Heart left ventricle (tissue), 16 donors: ENCODE measurements at regions of chr17 and their contacts with region 1.

Region 1: DNA sequence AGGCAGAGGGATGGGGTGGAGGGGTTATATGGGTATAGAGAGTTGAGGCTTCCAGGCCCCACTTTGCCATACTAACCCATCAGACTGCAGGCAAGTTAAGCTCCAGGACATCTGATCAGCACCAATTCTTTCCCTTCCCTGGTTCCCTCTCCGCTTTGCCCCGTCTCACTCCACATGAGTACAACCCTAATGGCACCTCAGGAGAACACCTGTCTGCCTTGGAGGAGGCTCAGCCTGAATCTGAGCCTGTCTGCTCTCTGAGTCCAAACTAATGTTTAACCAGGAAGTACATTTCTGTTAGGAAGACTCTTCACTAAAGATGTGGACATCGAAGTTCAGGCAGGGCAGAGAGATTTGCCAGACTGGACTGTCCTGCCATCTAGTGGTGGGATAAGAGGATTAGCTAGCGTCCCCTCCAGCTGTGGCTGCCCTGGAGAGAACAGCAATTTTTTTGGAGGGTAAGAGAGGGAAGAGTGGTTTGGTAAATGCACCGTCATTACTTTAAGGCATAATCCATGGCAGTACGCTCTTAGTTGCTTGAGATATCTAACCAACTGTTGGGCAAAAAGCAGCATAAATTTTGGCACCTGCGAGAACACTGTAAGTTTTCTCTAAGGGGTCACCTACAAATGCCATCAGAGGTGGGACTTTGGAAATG is 29.2 kb upstream of the LRRC75A start:
- DNase-seq: peak in 4 of 5 donors; percentile 70 to 80 (median 74)
- ATAC-seq: peak; percentile 86 to 93 (median 90)
- H3K4me3 ChIP-seq: no peak overlapping the region
- H3K27ac ChIP-seq: no peak overlapping the region
- H3K4me1 ChIP-seq: peaks cover 0 to 18% (median 7%) of the 10 kb centered on the region in 12 donors
- H3K27me3 ChIP-seq: no peaks in the 10 kb centered on the region
- CTCF ChIP-seq: peak; percentile 84 to 97 (median 92)
- POLR2A ChIP-seq: no peak

Region 2: DNA sequence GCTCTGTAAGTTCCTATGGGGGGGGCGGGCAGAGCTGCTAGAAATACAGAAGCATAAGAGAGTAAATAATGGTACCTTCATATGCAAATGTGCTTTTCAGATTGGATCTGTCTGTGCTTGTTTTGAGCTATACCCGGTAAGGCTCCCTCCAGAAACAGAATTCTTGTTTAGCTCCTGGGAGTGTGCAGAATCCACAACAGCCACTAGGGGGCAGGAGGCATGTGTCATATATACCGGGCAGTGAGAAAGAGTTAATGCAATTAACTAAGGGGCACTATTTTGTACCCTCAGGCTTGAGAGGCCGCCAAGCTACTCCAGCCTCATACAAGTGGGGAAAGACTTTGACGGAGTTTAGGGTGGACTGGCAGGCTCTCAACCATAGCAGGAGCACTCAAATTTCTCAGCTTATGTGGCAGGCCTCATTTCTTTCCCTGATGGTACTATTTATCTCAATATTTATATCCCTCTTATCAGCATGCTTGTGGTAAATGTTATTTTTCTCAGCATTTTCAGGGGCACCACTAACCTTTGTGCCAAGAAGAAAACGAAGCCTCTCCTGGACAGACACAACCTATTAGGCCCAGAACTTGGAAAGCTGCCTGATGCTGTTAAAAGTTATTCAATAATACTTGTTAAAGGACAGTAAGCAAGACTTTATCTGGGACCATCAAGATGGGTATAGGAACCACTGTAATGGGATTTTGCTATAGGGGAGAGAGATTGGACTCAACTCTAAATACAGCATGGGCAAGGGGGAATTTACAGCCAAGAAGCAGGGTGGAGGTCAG is 157.3 kb before region 1 on chr17:
- intact Hi-C with region 1: loop called in 9 of 10 experiments (anchors 1 to 5 kb)
- DNase-seq: peak; percentile 56 to 73 (median 66)
- ATAC-seq: peak; percentile 63 to 88 (median 82)
- H3K4me3 ChIP-seq: no peak overlapping the region
- H3K27ac ChIP-seq: peak overlapping the region in 2 of 12 donors; percentile 5 to 31
- H3K4me1 ChIP-seq: peaks cover 0 to 5% (median 0%) of the 10 kb centered on the region in 12 donors
- H3K27me3 ChIP-seq: no peaks in the 10 kb centered on the region
- CTCF ChIP-seq: peak; percentile 87 to 96 (median 92)
- POLR2A ChIP-seq: no peak

Region 3: DNA sequence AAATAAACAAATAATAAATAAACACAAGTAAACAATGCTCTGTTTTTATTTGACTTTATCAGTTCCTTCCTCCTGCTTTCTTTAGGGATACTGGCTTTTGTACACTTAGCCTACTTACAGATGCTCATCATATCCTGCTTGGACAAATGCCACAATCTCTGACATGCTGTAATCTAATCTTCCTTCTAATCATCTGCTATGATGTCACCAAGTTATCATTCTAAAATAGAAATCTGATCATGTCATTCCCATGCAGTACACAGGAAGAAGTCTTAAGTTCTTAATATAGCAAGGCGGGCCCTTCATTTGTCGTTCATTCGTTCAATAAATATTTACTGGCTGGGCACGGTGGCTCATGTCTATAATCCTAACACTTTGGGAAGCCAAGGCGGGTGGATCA is 149.5 kb before region 1 on chr17:
- intact Hi-C with region 1: loop called in 2 of 10 experiments (anchors 5 kb)
- DNase-seq: peak in 1 of 5 donors; percentile 31
- ATAC-seq: peak in 3 of 4 donors; percentile 15 to 77 (median 44)
- H3K4me3 ChIP-seq: no peak overlapping the region
- H3K27ac ChIP-seq: peak overlapping the region in 6 of 12 donors; percentile 16 to 63 (median 42)
- H3K4me1 ChIP-seq: peaks cover 0 to 19% (median 6%) of the 10 kb centered on the region in 12 donors
- H3K27me3 ChIP-seq: no peaks in the 10 kb centered on the region
- CTCF ChIP-seq: no peak
- POLR2A ChIP-seq: no peak

Region 4: GRCh38 chr17:16380640-16381495 is 140.3 kb before region 1 on chr17 and contains the start of gene UBB:
- intact Hi-C with region 1: loop called in 4 of 10 experiments (anchors 2 to 5 kb)
- DNase-seq: peak; percentile 98
- ATAC-seq: peak; percentile 98 to 99 (median 99)
- H3K4me3 ChIP-seq: peak within 1 kb of the TSS; percentile 45 to 83 (median 72)
- H3K27ac ChIP-seq: peak within 1 kb of the TSS; percentile 88 to 99 (median 95)
- H3K4me1 ChIP-seq: peaks cover 10 to 35% (median 25%) of the 10 kb centered on the region in 12 donors
- H3K27me3 ChIP-seq: no peaks in the 10 kb centered on the region
- CTCF ChIP-seq: peak in 3 of 12 donors; percentile 10 to 17 (median 13)
- POLR2A ChIP-seq: peak; percentile 70 to 97
- total RNA-seq, gene UBB: 665 to 2,180 (median 1,547) TPM

Region 5: DNA sequence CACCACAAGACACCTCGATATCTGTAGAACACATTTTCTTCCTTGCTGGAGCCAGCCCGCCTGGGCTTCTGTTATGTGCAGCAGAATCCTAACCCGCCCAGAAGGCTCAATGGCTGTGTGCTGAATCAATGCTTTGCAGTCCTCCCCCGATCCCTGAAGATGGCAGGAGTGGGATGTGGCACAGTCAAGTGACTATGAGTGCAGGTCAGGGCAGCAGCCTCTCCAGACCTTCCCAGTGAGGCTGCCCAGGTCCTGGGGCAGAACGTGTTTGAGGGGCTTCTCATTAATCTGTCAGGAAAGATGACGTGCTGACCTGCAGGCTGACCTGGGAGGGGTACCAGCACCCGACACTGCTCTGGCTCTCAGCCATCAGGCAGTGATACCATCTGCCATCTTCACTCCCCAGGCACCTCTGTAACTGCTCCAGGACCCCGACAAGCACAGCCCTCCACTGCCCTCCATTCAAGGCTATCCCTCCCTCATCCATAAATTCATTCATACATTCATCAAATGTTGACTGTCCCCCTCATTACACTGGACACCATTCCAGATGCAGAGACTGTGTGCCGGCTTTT is 64.4 kb before region 1 on chr17:
- intact Hi-C with region 1: loop called (anchors 1 to 2 kb)
- DNase-seq: no peak
- ATAC-seq: no peak
- H3K4me3 ChIP-seq: no peak overlapping the region
- H3K27ac ChIP-seq: no peak overlapping the region
- H3K4me1 ChIP-seq: peaks cover 0 to 17% (median 4%) of the 10 kb centered on the region in 12 donors
- H3K27me3 ChIP-seq: no peaks in the 10 kb centered on the region
- CTCF ChIP-seq: peak in 1 of 12 donors; percentile 14
- POLR2A ChIP-seq: no peak

Region 6: GRCh38 chr17:16463358-16464302 is 57.6 kb before region 1 on chr17:
- intact Hi-C with region 1: loop called in 1 of 10 experiments (anchors 2 kb)
- DNase-seq: peak in 4 of 5 donors; percentile 60 to 73 (median 64)
- ATAC-seq: peak; percentile 80 to 87 (median 84)
- H3K4me3 ChIP-seq: no peak overlapping the region
- H3K27ac ChIP-seq: peak overlapping the region in 4 of 12 donors; percentile 13 to 60 (median 44)
- H3K4me1 ChIP-seq: peaks cover 0 to 55% (median 19%) of the 10 kb centered on the region in 12 donors
- H3K27me3 ChIP-seq: no peaks in the 10 kb centered on the region
- CTCF ChIP-seq: peak in 7 of 12 donors; percentile 11 to 44 (median 17)
- POLR2A ChIP-seq: no peak